ENCODE measurements at regions of chr10 and their contacts with region 1.

Region 1: GRCh38 chr10:68074775-68075549 is at the start of gene HERC4:
- DNase-seq: peak; percentile 84 to 96 (median 92)

Region 2: GRCh38 chr10:67849331-67850011 is 225.5 kb before region 1 on chr10:
- intact Hi-C with region 1: loop called (anchors 10 kb)
- DNase-seq: peak; percentile 89 to 99 (median 97)

Region 3: DNA sequence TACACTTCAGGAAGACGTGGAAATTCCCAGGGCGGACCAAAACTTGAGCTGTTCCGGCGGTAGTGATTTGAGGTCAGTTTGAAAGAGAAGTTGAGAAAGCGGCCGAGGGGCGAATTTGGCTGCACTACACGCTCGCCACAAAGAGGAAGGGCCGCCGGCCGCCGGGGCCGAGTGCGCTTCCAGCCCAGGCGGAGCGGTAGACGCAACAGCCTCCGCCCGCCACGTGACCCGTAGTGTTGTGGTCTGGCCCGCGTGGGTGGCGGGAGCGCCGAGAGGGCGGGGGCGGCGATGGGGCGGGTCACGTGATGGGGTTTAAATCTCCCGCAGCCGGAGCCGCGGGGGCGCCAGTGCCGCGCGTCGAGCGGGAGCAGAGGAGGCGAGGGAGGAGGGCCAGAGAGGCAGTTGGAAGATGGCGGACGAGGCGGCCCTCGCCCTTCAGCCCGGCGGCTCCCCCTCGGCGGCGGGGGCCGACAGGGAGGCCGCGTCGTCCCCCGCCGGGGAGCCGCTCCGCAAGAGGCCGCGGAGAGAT is 190.6 kb before region 1 on chr10 and contains the start of gene SIRT1:
- intact Hi-C with region 1: loop called (anchors 2 kb)
- DNase-seq: peak; percentile 93 to 99 (median 97)

Region 4: GRCh38 chr10:68156373-68157185 is 81.6 kb after region 1 on chr10:
- intact Hi-C with region 1: loop called (anchors 10 kb)
- DNase-seq: peak in 37 of 42 donors; percentile 31 to 91 (median 68)

Region 5: GRCh38 chr10:68231106-68231816 is 156.3 kb after region 1 on chr10:
- intact Hi-C with region 1: loop called (anchors 5 kb)
- DNase-seq: peak; percentile 39 to 87 (median 73)

Region 6: GRCh38 chr10:68331455-68332258 is 256.7 kb after region 1 on chr10 and contains the start of gene HNRNPH3:
- intact Hi-C with region 1: loop called (anchors 5 kb)
- DNase-seq: peak; percentile 94 to 99 (median 98)

Measured in head of caudate nucleus (tissue), 42 donors.